ENCODE measurements at regions of chr2 and their contacts with region 1.

Region 1: DNA sequence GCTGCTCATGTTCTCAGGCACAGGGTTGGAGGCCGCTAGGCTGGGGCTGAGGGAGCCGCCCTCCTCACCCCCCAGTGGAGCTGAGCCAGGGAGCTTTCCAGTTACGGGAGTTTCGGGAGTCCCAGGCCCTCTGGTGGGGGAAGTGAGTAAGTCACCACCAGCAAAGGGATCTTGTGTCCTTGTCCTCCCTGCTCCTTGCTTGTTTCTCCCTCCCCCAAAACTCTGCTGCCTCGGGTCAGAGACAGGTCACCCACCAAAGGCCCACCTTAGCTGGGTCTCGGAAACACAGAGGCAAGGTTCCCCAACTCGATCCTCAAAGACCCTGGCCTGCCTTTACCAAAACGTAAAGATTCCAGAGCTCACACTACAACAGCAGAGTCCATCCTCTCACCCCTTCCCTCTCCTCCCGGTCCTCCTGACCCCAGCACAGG is 60.5 kb upstream of the POMC start:
- DNase-seq: peak; percentile 87
- ATAC-seq: peak; percentile 91
- H3K4me3 Mint-ChIP-seq: no peak overlapping the region
- H3K27ac Mint-ChIP-seq: peak overlapping the region; percentile 87
- H3K4me1 Mint-ChIP-seq: peaks cover 41% of the 10 kb centered on the region
- H3K27me3 Mint-ChIP-seq: no peaks in the 10 kb centered on the region
- CTCF ChIP-seq: peak; percentile 83

Region 2: DNA sequence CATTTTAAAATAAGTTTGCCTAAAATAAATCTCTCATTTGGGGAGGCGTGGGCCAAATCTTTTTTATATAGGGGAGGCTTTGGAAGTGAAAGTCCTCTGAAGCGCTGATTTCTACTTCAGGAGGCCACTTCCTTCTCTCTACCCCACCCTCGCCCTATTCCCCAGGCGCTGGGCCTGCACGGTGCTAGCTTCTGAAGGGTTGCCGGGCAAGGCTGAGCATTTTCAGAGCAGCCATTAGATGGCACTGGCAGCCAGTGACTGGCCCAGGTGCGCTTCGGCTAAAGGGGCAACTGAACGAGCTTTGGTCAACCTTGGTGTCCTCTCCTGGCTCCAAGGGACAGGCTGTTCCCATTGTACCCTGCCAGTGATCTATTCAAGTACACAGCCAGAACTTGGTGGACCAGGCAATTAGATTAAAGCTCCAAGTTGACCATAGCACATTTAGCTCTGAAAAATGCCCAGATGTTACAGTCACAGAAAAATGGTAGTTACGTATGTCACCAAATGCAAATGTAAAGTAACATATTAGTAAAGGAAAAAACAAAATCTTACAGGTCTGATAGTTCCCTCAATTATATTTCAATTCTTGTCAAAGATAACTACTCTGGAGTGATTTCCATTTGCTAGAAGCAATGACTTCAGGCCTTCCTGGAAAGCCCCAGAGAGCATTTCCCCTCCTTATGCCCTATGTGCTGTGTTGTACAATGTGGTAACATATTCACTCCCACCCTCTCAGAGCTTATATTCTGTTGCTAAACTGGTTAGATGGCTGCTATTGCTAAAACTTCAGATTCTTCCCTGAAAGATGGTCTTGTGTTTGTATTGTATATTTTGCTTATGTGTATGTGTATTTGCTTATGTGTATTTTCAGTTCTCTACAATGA is 62.6 kb before region 1 on chr2:
- CTCF ChIA-PET with region 1: interaction called, 63 read pairs
- POLR2A ChIA-PET with region 1: interaction called, 3 read pairs
- DNase-seq: peak; percentile 70
- ATAC-seq: peak; percentile 73
- H3K4me3 Mint-ChIP-seq: no peak overlapping the region
- H3K27ac Mint-ChIP-seq: no peak overlapping the region
- H3K4me1 Mint-ChIP-seq: peaks cover 9% of the 10 kb centered on the region
- H3K27me3 Mint-ChIP-seq: peaks cover 63% of the 10 kb centered on the region
- CTCF ChIP-seq: no peak

Region 3: DNA sequence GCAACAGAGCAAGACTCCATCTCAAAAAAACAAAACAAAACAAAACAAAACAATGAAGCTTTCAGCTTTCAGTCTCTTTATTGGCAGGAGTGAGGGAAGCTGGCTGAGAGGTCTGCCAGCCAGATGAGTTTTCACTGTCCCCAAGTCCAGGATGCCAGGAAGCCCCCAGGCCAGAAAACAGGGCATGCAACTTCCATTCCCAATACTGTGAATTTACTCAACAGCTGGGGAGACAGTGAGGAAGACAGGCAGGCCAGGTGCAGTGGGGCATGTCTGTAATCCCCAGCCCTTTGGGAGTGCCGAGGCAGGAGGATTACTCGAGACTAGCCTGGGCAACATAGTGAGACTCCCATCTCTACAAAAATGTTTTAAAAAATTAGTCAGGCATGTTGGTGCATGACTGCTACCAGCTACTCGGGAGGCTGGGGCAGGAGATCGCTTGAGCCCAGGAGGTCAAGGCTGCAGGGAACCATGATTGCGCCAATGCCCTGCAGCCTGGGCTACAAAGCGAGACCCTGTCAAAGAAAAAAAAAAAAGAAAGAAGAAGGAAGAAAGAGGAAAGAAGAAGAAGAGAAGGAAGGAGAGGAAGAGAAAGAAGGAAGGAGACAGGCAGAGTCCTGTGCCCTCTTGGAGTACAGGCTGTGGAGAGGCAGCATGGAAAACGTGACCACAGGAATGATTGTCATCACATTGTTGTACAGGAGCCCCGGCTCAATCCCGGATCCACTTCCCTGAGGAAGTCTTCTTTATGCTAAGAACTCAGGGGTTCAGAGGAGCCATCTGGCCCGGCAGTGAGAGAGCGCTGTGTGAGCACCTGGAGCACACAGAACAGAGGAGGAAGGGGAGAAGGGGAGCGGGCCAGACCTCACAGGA is 31.3 kb before region 1 on chr2:
- CTCF ChIA-PET with region 1: interaction called, 12 read pairs
- POLR2A ChIA-PET with region 1: no interaction called
- DNase-seq: no peak
- ATAC-seq: peak; percentile 18
- H3K4me3 Mint-ChIP-seq: no peak overlapping the region
- H3K27ac Mint-ChIP-seq: no peak overlapping the region
- H3K4me1 Mint-ChIP-seq: peaks cover 8% of the 10 kb centered on the region
- H3K27me3 Mint-ChIP-seq: no peaks in the 10 kb centered on the region; the same call in 1 of the 2 replicates
- CTCF ChIP-seq: no peak

Region 4: DNA sequence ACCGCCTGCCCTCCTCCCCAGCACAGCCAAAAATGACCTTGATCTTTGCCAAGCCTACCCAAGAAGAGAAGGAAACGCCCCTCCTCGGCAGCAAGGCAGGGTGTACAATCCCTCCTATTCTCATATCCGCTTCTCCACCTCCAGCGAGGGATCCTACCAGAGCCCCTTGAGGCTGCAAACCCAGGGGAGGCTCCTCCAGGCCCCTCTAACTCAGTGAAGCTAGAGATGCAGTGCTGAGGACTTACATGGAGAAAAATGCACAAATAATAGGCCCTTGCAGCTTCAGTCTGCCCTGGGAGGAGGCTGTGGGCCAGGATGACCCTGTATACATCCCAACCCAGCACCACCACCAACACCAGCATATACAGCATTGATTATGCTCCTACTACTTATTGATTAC is 13.6 kb before region 1 on chr2:
- CTCF ChIA-PET with region 1: interaction called, 23 read pairs
- POLR2A ChIA-PET with region 1: interaction called, 3 read pairs
- DNase-seq: no peak
- ATAC-seq: peak; percentile 4; the same call in 1 of the 2 replicates
- H3K4me3 Mint-ChIP-seq: peak overlapping the region; percentile 82
- H3K27ac Mint-ChIP-seq: peak overlapping the region; percentile 90
- H3K4me1 Mint-ChIP-seq: peaks cover 7% of the 10 kb centered on the region; the same call in 1 of the 2 replicates
- H3K27me3 Mint-ChIP-seq: no peaks in the 10 kb centered on the region
- CTCF ChIP-seq: no peak

Region 5: DNA sequence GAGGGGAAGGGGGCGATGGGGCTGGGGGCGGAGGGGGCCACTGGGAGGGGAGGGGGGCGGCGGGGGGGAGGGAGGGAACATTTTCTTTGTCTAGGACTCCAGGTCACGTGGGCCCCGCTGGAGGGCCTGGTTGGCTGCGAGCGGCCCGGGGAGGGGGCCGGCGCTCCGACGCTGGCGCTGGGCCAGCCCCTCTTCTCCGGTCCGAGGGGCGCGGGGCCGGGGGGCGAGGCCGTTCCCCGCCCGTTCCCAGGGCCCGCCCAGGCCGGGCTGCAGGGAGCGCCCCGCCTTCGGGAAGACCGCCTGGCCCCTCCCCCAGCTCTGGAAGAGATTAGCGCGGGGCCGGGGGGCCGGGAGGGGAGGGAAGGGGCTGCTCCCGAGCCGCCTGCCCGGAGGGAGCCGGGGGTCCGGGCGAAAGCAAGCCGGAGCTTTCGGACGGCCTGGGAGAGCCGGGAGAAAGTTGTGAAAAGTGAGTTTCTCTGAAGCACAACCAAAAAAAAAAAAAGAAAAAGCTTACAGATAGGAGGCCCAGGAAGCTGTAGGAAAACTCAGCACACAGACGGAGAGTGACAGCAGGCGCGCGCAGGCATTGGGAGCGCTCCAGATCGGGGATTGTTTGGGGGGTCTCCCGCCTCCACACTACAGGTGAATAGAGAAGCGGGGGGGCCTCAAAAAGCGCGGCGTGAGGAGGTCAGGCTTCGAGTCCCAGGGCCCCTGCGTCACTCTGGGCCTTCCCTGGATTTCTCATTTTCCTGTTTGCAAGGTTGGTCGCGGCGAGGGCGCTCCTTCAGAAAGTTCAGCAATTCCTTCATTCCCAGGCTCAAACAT is 23.6 kb after region 1 on chr2:
- CTCF ChIA-PET with region 1: interaction called, 15 read pairs
- POLR2A ChIA-PET with region 1: interaction called, 4 read pairs
- DNase-seq: peak; percentile 92
- ATAC-seq: peak; percentile 93
- H3K4me3 Mint-ChIP-seq: peak overlapping the region; percentile 82
- H3K27ac Mint-ChIP-seq: peak overlapping the region; percentile 55
- H3K4me1 Mint-ChIP-seq: peaks cover 58% of the 10 kb centered on the region
- H3K27me3 Mint-ChIP-seq: no peaks in the 10 kb centered on the region; the same call in 1 of the 2 replicates
- CTCF ChIP-seq: no peak

Region 6: GRCh38 chr2:25276569-25277465 is 48.0 kb after region 1 on chr2:
- CTCF ChIA-PET with region 1: interaction called, 11 read pairs
- POLR2A ChIA-PET with region 1: interaction called, 4 read pairs
- DNase-seq: peak; percentile 81
- ATAC-seq: peak; percentile 47
- H3K4me3 Mint-ChIP-seq: peak overlapping the region; percentile 47
- H3K27ac Mint-ChIP-seq: no peak overlapping the region
- H3K4me1 Mint-ChIP-seq: peaks cover 64% of the 10 kb centered on the region
- H3K27me3 Mint-ChIP-seq: no peaks in the 10 kb centered on the region; the same call in 1 of the 2 replicates
- CTCF ChIP-seq: peak; percentile 73